Testis (tissue), 5 donors: ENCODE measurements at regions of chr17 and their contacts with region 1.

Region 1: GRCh38 chr17:40069751-40070708 is 7.3 kb downstream of the THRA start:
- DNase-seq: peak; percentile 53
- H3K4me3 ChIP-seq: no peak overlapping the region
- H3K27ac ChIP-seq: peak overlapping the region; percentile 88 to 97
- H3K4me1 ChIP-seq: peaks cover 78% of the 10 kb centered on the region
- H3K27me3 ChIP-seq: no peaks in the 10 kb centered on the region
- CTCF ChIP-seq: peak in 2 of 3 experiments; percentile 4 to 17
- POLR2A ChIP-seq: no peak

Region 2: GRCh38 chr17:40108970-40109824 is 39.2 kb after region 1 on chr17:
- intact Hi-C with region 1: loop called (anchors 5 kb)
- DNase-seq: no peak
- H3K4me3 ChIP-seq: no peak overlapping the region
- H3K27ac ChIP-seq: peak overlapping the region; percentile 93 to 99
- H3K4me1 ChIP-seq: peaks cover 95% of the 10 kb centered on the region
- H3K27me3 ChIP-seq: no peaks in the 10 kb centered on the region
- CTCF ChIP-seq: peak in 1 of 3 experiments; percentile 1
- POLR2A ChIP-seq: no peak

Region 3: GRCh38 chr17:40130352-40131042 is 60.5 kb after region 1 on chr17:
- intact Hi-C with region 1: no loop called
- DNase-seq: no peak
- H3K4me3 ChIP-seq: no peak overlapping the region
- H3K27ac ChIP-seq: no peak overlapping the region
- H3K4me1 ChIP-seq: no peaks in the 10 kb centered on the region
- H3K27me3 ChIP-seq: no peaks in the 10 kb centered on the region
- CTCF ChIP-seq: no peak
- POLR2A ChIP-seq: no peak